Activated naive CD4-positive, alpha-beta T cell treated with anti-CD3 and anti-CD28 coated beads for 36 hours (primary cell): ENCODE measurements at regions of chr6 and their contacts with region 1.

Region 1: GRCh38 chr6:149834513-149835481 is 29.4 kb downstream of the LRP11 start:
- DNase-seq: peak; percentile 87
- H3K4me3 Mint-ChIP-seq: no peak overlapping the region
- H3K27ac Mint-ChIP-seq: no peak overlapping the region
- H3K4me1 Mint-ChIP-seq: peaks cover 2% of the 10 kb centered on the region
- H3K27me3 Mint-ChIP-seq: no peaks in the 10 kb centered on the region

Region 2: DNA sequence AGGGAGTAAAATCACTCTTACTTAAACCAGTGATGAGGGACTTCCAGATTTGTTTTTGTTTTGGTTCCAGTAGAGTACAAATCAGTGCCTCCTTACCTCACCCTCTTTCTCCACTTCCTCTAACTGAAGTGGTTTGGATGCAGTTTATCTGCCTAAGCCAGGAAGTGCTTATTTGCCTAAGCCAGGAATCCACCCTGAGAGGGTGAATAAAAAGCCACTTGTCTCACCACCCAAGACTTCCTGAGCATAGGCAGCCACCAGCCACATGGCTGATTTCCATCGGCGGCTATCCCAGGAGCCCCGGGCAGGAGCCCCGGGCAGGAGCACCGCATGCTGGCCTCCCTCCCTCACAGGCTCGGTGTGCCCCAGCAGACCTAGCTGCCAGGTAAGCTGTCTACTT is 17.4 kb after region 1 on chr6:
- CTCF ChIA-PET with region 1: interaction called, 10 read pairs
- intact Hi-C with region 1: no loop called
- DNase-seq: peak; percentile 30
- H3K4me3 Mint-ChIP-seq: no peak overlapping the region
- H3K27ac Mint-ChIP-seq: no peak overlapping the region
- H3K4me1 Mint-ChIP-seq: peaks cover 13% of the 10 kb centered on the region
- H3K27me3 Mint-ChIP-seq: no peaks in the 10 kb centered on the region